Dendritic cell treated with granulocyte-macrophage colony-stimulating factor and Interleukin-4, amounts not matched to agents 40 ng/mL and 50 ng/mL, for 4 days (primary cell): ENCODE measurements at regions of chr1 and their contacts with region 1.

Region 1: GRCh38 chr1:38990738-38991639 is at the start of gene AKIRIN1:
- H3K4me3 Mint-ChIP-seq: peak within 1 kb of the TSS; percentile 80
- H3K27ac Mint-ChIP-seq: peak within 1 kb of the TSS; percentile 85
- H3K4me1 Mint-ChIP-seq: peaks cover 36% of the 10 kb centered on the region
- H3K27me3 Mint-ChIP-seq: no peaks in the 10 kb centered on the region

Region 2: DNA sequence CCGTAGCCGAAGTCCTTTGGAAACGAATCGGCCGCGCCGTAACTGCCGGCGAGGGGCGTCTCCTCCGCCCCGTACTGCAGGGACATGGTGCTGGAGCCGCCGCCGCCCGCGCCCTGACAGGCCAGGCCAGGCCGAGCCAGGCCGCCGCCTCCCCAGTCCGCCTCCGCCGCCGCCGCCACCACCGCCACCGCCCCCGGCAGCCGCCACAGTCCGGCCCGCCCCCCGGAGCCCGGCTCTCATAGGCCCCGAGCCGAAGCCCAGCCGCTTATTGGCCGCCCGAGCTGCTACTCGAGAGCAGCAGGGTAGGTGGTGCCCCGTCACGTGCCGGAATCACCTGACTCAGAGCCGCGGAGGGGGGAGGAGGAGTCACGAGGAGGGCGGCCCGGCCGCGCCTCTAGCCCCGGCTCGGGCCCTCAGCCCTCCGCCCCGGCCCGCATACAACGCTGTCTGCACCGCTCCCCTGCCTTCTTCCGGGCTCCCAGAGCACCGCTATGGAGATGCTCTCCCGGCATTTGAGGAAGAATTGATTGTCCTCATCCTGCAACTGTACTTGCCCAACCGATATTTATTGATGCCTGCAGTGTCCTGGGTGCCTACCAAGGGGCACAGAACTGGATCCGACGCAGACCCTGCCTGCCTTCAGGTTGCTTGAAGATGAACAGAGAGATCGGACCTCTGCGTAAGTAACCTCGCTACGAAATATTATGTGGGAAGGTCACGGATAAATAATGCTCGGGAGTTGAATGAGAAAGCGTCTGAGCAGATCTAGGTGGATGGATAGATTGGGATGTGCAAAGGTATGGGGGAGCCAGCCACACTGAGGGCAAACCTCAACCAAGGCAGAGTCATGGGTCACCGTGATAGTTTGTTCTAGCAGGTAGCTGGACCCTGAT is 131.2 kb before region 1 on chr1 and contains the start of gene RRAGC:
- intact Hi-C with region 1: loop called (anchors 5 kb)
- H3K4me3 Mint-ChIP-seq: peak within 1 kb of the TSS; percentile 94
- H3K27ac Mint-ChIP-seq: peak within 1 kb of the TSS; percentile 87
- H3K4me1 Mint-ChIP-seq: peaks cover 57% of the 10 kb centered on the region
- H3K27me3 Mint-ChIP-seq: no peaks in the 10 kb centered on the region